Esophagus muscularis mucosa (tissue), 4 donors: ENCODE measurements at regions of chr11 and their contacts with region 1.

Region 1: DNA sequence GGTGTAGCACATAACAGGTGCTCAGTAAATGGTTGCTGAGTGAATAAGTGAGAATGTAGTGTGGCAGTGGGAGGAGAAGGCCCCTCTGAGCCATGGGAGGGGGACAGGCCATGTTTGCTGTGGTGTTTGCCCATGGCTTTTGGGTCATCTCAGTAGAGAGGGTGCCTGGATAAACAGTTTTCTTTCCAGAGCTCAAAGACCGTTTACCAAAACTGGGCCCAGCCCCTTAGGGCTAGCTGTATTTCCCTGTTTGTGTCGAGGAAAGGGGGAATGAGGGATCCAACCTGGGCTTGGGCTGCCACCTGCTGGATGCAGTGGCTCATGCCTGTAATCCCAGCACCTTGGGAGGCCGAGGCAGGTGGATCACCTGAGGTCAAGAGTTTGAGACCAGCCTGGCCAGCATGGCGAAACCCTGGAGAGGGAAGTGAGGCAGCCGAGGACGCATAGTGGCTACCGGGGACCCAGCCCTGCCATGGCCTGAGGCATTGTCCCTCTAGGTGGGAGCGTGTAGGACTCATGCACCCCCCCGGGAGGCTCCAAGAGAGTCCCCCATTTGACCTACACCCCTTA is 8.7 kb upstream of the LTO1 start:
- DNase-seq: no peak
- H3K4me3 ChIP-seq: no peak overlapping the region
- H3K27ac ChIP-seq: no peak overlapping the region
- H3K4me1 ChIP-seq: peaks cover 6 to 9% (median 8%) of the 10 kb centered on the region in 4 donors
- H3K27me3 ChIP-seq: peaks cover 0 to 22% (median 0%) of the 10 kb centered on the region in 4 donors
- CTCF ChIP-seq: peak in 1 of 3 experiments; percentile 4
- EP300 ChIP-seq: no peak
- POLR2A ChIP-seq: no peak

Region 2: DNA sequence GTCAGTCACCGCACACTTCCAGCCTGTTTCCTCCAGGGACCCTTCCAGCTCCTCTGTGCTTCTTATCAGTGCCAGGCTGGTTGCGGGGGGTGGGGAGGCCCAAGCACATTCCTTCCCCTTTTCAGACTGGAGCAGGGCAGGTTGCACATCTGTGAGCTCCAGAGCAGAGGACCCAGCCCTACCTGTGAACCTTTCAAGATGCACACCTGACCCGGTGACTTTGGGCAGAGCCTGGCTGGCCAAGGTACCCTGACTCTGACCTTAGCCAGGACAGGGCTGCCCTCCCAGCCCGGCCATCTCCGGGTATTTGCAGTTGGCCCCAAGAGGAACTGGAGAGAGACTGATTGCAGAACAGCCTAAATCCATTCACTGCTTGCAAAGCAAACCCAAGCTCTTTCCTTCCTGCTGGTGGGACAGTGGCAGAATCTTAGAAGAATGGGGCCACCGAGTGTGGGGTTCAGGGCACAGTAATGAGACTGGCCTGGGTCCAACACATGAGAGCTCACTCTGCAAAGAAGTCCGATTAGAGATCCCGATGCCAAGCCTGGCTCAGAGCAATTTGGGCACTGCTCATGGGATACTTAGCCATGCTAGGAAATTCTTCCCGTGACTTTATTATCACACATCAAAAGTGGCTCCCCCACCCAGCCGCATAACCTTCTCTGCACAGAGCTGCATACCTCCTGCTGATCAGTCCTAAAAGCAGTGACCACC is 107.6 kb before region 1 on chr11:
- intact Hi-C with region 1: no loop called
- DNase-seq: no peak
- H3K4me3 ChIP-seq: no peak overlapping the region
- H3K27ac ChIP-seq: no peak overlapping the region
- H3K4me1 ChIP-seq: no peaks in the 10 kb centered on the region
- H3K27me3 ChIP-seq: no peaks in the 10 kb centered on the region
- CTCF ChIP-seq: no peak
- EP300 ChIP-seq: no peak
- POLR2A ChIP-seq: no peak

Region 3: DNA sequence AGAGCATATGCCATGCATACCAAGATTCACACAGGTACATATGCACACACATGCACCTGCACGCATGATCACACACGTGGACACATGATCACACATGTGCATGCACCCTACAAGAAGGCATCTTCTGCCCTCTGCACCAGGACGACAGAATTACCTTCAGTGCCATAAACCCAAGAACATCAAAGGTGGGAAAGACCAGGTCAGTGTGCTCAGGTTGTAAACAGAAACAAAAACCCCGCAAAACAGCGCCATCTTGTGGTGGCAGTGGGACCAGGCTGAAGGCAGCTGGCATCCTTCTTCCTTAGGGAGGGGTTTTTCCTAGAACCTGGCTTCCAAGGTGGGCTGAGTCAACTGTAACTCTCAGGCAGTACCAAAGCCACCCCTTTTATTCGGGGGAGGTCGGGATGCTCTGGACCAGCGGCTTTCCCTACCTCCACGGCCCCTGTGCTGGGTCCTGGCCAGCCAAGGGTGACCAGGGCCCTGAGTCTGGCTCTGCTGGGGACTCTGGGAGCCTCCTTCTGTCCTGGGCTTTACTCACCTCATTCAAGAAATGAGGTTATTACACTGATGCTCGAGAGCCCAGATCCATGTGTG is 204.7 kb after region 1 on chr11:
- intact Hi-C with region 1: loop called (anchors 5 kb)
- DNase-seq: no peak
- H3K4me3 ChIP-seq: no peak overlapping the region
- H3K27ac ChIP-seq: no peak overlapping the region
- H3K4me1 ChIP-seq: peaks cover 0 to 20% (median 15%) of the 10 kb centered on the region in 4 donors
- H3K27me3 ChIP-seq: peaks cover 0 to 76% (median 0%) of the 10 kb centered on the region in 4 donors
- CTCF ChIP-seq: peak; percentile 59 to 90 (median 78)
- EP300 ChIP-seq: no peak
- POLR2A ChIP-seq: no peak

Region 4: DNA sequence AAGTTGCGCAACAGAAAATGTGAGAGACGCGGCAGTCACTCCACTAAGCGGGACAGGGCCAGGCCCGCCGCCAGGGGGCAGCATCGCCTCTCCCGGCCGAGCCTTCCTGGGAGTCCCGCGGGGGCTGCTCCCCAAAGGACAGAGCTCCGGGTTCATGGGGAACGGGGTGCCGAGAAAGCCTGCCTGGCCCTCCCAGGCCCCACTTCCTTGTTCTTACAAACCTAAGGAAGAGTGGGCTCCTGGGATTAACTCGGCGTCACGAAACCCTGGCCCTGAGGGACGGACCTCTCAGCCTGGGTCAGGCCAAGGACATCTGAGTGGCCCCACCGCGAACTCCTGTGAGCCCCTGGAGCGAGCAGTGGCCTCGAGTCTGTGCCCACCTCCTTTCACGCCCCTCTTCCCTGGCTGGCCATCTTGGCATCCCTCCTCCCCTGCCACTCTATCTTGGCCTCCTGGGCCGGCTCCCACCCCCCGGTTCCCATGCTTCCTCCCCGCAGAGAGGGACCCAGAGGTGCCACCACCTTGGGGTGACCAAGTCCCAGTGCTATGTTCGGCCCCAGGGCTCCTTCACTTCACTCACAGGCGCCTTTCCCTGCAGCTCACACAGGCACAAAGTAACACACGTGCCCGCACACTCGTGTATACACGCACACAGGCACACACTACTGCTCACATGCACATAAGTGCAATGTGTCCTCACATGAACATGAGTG is 235.2 kb after region 1 on chr11:
- intact Hi-C with region 1: loop called (anchors 10 kb)
- DNase-seq: no peak
- H3K4me3 ChIP-seq: no peak overlapping the region
- H3K27ac ChIP-seq: peak overlapping the region; percentile 49 to 63 (median 58)
- H3K4me1 ChIP-seq: peaks cover 27 to 33% (median 30%) of the 10 kb centered on the region in 4 donors
- H3K27me3 ChIP-seq: peaks cover 0 to 82% (median 0%) of the 10 kb centered on the region in 4 donors
- CTCF ChIP-seq: peak; percentile 82 to 88 (median 88)
- EP300 ChIP-seq: no peak
- POLR2A ChIP-seq: no peak

Region 5: GRCh38 chr11:70191495-70192140 is 507.8 kb after region 1 on chr11:
- intact Hi-C with region 1: loop called (anchors 2 kb)
- DNase-seq: no peak
- H3K4me3 ChIP-seq: no peak overlapping the region
- H3K27ac ChIP-seq: no peak overlapping the region
- H3K4me1 ChIP-seq: peaks cover 0 to 8% (median 3%) of the 10 kb centered on the region in 4 donors
- H3K27me3 ChIP-seq: peaks cover 0 to 32% (median 3%) of the 10 kb centered on the region in 4 donors
- CTCF ChIP-seq: peak; percentile 71 to 80 (median 71)
- EP300 ChIP-seq: no peak
- POLR2A ChIP-seq: no peak

Region 6: GRCh38 chr11:70367071-70367470 is 683.2 kb after region 1 on chr11:
- intact Hi-C with region 1: no loop called
- DNase-seq: no peak
- H3K4me3 ChIP-seq: no peak overlapping the region
- H3K27ac ChIP-seq: no peak overlapping the region
- H3K4me1 ChIP-seq: peaks cover 0 to 5% (median 0%) of the 10 kb centered on the region in 4 donors
- H3K27me3 ChIP-seq: no peaks in the 10 kb centered on the region
- CTCF ChIP-seq: no peak
- EP300 ChIP-seq: no peak
- POLR2A ChIP-seq: no peak